ENCODE measurements at regions of chr6 and their contacts with region 1.

Region 1: GRCh38 chr6:157021344-157021992 is 244.3 kb downstream of the ARID1B start:
- DNase-seq: peak; percentile 76 to 95
- H3K4me3 ChIP-seq: peak overlapping the region; percentile 85 to 93
- H3K27ac ChIP-seq: peak overlapping the region; percentile 99
- H3K4me1 ChIP-seq: peaks cover 0 to 16% of the 10 kb centered on the region in 2 donors
- H3K27me3 ChIP-seq: no peaks in the 10 kb centered on the region
- CTCF ChIP-seq: peak; percentile 9 to 43 (median 22)

Region 2: GRCh38 chr6:155314092-155314772 is 1707.2 kb before region 1 on chr6 and contains the start of gene TFB1M:
- intact Hi-C with region 1: loop called (anchors 5 kb)
- DNase-seq: peak; percentile 94 to 99
- H3K4me3 ChIP-seq: peak within 1 kb of the TSS; percentile 77 to 90
- H3K27ac ChIP-seq: peak within 1 kb of the TSS; percentile 79 to 84
- H3K4me1 ChIP-seq: peaks cover 0 to 3% of the 10 kb centered on the region in 2 donors
- H3K27me3 ChIP-seq: no peaks in the 10 kb centered on the region
- CTCF ChIP-seq: no peak
- total RNA-seq, gene TFB1M: 2.9 TPM

Region 3: DNA sequence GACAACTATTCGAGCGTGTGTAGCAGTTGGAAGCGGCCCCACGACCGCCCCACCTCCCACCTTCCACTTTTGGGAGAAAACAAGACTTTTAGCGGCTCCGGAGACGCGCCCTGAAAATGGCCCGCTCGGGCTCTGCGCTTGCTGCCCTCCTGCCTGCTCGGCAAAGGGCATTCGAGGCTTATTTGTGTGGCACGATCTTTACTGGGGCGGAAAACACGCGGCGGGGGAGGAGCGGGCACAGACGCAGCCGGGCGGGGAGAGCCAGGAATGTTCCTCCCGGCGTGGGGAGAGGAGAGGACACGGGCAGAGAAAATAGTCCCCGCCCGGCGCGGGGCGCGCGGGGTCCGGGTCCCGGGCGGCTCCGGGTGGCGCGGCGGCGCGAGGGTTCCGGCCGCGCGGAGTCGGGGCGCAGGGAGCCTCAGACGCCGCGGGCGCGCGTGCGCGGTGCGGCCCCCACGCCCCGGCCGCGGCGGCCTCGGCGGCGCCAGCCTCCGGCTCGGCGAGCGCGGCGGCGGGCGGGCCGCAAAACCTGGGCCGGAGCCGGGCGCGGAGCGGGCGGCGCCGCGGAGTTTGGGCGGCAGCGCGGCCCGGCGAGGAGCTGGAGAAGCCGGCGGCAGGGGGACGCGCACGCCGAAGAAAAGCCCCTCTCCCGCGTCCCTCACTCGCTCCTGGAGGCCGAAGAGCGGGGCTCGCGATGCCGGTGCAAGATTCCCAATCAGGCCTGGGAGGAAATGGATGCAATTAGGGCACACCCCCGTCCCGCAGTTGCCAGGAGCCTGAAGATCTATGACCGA is 334.3 kb before region 1 on chr6:
- intact Hi-C with region 1: loop called (anchors 1 kb)
- DNase-seq: peak; percentile 77 to 97
- H3K4me3 ChIP-seq: peak overlapping the region; percentile 71 to 93
- H3K27ac ChIP-seq: peak overlapping the region; percentile 97
- H3K4me1 ChIP-seq: peaks cover 0 to 6% of the 10 kb centered on the region in 2 donors
- H3K27me3 ChIP-seq: no peaks in the 10 kb centered on the region
- CTCF ChIP-seq: no peak

Region 4: DNA sequence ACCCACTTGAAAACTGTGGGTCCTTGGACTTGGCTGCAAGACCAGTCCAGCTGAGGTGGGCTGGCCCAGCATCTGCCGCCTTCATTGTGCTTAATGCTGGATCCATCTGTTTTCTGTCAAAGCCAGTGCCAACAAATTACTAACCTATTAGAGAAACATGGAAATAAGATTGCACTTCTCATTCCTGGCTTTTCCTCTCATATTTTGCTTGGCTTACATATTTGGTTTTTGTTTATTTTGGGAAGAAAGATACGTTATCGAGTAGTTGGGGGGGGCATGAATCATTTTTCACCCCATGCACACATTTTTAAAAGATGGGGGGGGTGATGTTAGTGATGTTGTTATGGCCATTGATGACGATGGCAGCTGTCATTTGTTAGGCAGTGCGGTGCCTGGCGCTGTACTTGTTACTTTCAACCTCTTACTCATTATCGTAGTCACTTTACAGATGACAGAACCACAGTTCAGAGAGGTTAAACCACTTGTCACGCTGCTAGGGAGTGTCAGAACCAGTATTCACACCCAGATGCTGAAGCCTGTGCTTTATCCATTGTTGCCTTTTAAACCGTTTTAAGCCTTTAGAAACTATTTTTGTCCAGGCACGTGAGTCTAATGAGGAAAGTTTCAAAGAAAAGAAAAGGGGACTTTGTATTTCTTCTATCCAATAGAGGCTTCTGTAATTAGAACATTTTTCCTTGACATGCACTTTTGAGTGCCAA is 121.9 kb after region 1 on chr6:
- intact Hi-C with region 1: loop called (anchors 5 kb)
- DNase-seq: peak in 1 of 2 donors; percentile 86
- H3K4me3 ChIP-seq: peak overlapping the region; percentile 4 to 36
- H3K27ac ChIP-seq: peak overlapping the region; percentile 67 to 78
- H3K4me1 ChIP-seq: peaks cover 13 to 38% of the 10 kb centered on the region in 2 donors
- H3K27me3 ChIP-seq: no peaks in the 10 kb centered on the region
- CTCF ChIP-seq: no peak

Region 5: DNA sequence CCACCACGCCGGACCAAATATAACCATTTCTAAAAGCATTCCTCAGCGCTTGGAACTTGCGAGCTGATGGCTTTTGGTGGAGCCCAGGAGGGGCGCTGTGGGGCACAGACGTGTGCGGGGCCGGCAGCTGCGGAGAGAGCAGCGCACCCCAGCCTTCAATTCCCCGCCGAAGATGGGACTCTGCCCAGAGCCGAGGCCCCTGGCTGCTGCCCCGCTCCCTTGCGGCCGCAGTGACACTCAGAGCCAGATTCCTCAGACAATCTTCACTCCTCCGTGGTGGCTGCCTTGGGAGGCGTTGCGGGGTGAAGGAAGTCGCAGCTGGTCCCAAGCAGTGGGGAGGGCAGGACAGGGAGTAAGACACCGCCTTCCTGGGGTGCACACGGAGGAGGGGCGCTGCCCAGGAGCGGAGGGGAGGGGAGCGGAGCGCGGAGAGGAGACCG is 214.2 kb after region 1 on chr6:
- intact Hi-C with region 1: loop called (anchors 5 kb)
- DNase-seq: peak; percentile 45 to 88
- H3K4me3 ChIP-seq: peak overlapping the region; percentile 59 to 64
- H3K27ac ChIP-seq: peak overlapping the region; percentile 96
- H3K4me1 ChIP-seq: peaks cover 7 to 28% of the 10 kb centered on the region in 2 donors
- H3K27me3 ChIP-seq: no peaks in the 10 kb centered on the region
- CTCF ChIP-seq: peak; percentile 81 to 87 (median 87)